CD14-positive monocyte (primary cell): ENCODE measurements at regions of chr1 and their contacts with region 1.

Region 1: DNA sequence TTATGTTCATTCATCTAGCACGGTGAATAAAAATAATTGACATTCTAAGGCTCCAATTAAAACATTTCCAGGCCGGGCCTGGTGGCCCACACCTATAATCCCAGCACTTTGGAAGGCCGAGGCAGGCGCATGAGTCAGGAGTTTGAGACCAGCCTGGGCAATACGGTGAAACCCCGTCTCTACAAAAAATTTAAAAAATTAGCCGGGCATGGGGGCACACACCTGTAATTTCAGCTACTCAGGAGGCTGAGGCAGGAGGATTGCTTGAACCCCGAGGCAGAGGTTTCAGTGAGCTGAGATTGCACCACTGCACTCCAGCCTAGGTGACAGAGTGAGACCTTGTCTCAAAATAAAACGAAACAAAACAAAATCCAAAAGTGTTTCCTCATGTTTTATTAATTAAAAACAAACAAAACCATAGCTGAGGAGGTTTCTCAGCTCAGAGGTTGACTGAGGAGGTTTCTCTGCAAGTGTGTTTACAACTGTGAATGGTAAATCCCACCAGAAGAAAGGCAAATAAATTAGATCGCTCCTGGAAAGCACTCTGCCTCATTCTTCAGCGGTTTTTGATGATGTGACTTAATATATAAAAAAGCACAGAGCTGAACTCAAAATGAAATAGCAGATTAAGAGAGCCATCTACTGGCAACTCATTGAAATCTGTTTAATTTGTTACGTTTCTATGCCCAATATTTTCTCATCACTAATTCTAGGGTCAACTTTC is 37.7 kb upstream of the ATG4C start:
- DNase-seq: peak; percentile 15 to 49 (median 24)
- H3K4me3 ChIP-seq: no peak overlapping the region
- H3K4me3 Mint-ChIP-seq: no peak overlapping the region
- H3K27ac ChIP-seq: no peak overlapping the region
- H3K27ac Mint-ChIP-seq: no peak overlapping the region
- H3K4me1 ChIP-seq: no peaks in the 10 kb centered on the region
- H3K4me1 Mint-ChIP-seq: no peaks in the 10 kb centered on the region
- H3K27me3 ChIP-seq: no peaks in the 10 kb centered on the region
- H3K27me3 Mint-ChIP-seq: peaks cover 0 to 7% (median 3%) of the 10 kb centered on the region in 3 donors
- CTCF ChIP-seq: peak; percentile 74

Region 2: DNA sequence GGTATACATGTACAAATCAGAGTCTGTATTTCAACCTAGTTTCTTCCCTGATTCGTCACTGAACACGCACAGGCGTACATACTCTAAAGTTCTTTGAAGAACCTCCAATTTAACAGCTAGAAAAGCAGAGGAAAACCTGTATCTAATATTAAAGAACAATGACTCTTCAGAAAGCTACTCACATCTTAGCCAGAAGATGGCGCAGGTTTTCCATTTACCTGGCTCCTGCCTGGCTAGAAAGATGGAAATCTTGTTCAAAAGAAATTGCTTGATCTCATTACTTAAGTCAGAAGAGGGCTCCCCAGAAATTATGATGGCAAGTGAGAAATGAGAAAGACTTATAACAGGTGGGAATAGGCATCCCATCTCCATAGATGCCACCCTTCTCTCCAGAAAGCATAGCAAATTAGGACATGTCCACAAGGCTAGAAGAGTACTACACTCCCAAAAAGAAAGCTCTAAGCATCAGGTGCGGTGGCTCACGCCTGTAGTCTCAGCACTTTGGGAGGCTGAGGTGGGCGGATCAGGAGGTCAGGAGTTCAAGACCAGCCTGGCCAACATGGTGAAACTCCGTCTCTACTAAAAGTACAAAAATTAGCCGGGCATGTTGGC is 570.6 kb before region 1 on chr1:
- intact Hi-C with region 1: loop called in 1 of 2 experiments (anchors 5 kb)
- DNase-seq: peak; percentile 11 to 40 (median 20)
- H3K4me3 ChIP-seq: no peak overlapping the region
- H3K4me3 Mint-ChIP-seq: no peak overlapping the region
- H3K27ac ChIP-seq: no peak overlapping the region
- H3K27ac Mint-ChIP-seq: no peak overlapping the region
- H3K4me1 ChIP-seq: no peaks in the 10 kb centered on the region
- H3K4me1 Mint-ChIP-seq: no peaks in the 10 kb centered on the region
- H3K27me3 ChIP-seq: no peaks in the 10 kb centered on the region
- H3K27me3 Mint-ChIP-seq: peaks cover 2 to 5% (median 4%) of the 10 kb centered on the region in 3 donors
- CTCF ChIP-seq: peak; percentile 75

Region 3: GRCh38 chr1:62508187-62508758 is 238.0 kb before region 1 on chr1:
- intact Hi-C with region 1: loop called (anchors 5 to 10 kb)
- DNase-seq: peak; percentile 17 to 33 (median 29)
- H3K4me3 ChIP-seq: no peak overlapping the region
- H3K4me3 Mint-ChIP-seq: no peak overlapping the region
- H3K27ac ChIP-seq: no peak overlapping the region
- H3K27ac Mint-ChIP-seq: no peak overlapping the region
- H3K4me1 ChIP-seq: no peaks in the 10 kb centered on the region
- H3K4me1 Mint-ChIP-seq: no peaks in the 10 kb centered on the region
- H3K27me3 ChIP-seq: no peaks in the 10 kb centered on the region
- H3K27me3 Mint-ChIP-seq: peaks cover 0 to 3% (median 0%) of the 10 kb centered on the region in 3 donors
- CTCF ChIP-seq: peak; percentile 61

Region 4: GRCh38 chr1:62599044-62599443 is 147.2 kb before region 1 on chr1:
- intact Hi-C with region 1: no loop called
- DNase-seq: no peak
- H3K4me3 ChIP-seq: no peak overlapping the region
- H3K4me3 Mint-ChIP-seq: no peak overlapping the region
- H3K27ac ChIP-seq: no peak overlapping the region
- H3K27ac Mint-ChIP-seq: no peak overlapping the region
- H3K4me1 ChIP-seq: no peaks in the 10 kb centered on the region
- H3K4me1 Mint-ChIP-seq: no peaks in the 10 kb centered on the region
- H3K27me3 ChIP-seq: no peaks in the 10 kb centered on the region
- H3K27me3 Mint-ChIP-seq: no peaks in the 10 kb centered on the region
- CTCF ChIP-seq: no peak